MCF 10A (cell line): ENCODE measurements at regions of chr17 and their contacts with region 1.

Region 1: GRCh38 chr17:38351412-38352222 is at the start of gene SOCS7:
- DNase-seq: peak; percentile 91
- H3K4me3 Mint-ChIP-seq: peak within 1 kb of the TSS; percentile 81
- H3K27ac Mint-ChIP-seq: peak within 1 kb of the TSS; percentile 82
- H3K4me1 Mint-ChIP-seq: peaks cover 29% of the 10 kb centered on the region
- H3K27me3 Mint-ChIP-seq: no peaks in the 10 kb centered on the region
- CTCF ChIP-seq: no peak
- total RNA-seq, gene SOCS7: 26.2 and 32.1 TPM in 2 replicates

Region 2: DNA sequence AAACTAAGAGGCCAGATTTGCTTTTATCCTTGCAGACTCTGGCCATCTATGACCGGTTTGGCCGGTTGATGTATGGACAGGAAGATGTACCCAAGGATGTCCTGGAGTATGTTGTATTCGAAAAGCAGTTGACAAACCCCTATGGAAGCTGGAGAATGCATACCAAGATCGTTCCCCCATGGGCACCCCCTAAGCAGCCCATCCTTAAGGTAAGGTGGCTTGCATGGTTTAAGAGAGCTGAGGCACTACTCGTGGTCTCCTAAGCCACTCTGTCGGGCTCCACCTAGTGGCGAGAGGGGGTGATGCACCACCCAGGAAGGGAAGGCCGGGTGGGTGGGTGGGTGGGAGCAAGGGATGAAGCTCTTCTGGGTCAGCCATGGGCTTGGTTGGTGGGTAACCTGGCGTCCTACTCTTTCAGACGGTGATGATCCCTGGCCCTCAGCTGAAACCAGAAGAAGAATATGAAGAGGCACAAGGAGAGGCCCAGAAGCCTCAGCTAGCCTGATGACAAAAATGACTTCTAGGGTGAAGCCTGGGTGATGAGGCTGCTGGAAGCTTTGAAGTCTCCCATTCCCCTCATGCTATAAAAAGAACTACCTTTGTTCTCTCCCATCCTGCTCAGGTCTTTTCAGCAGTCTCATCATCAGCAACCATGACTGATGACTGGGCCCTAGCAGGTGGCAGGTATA is 29.4 kb before region 1 on chr17:
- CTCF ChIA-PET with region 1: interaction called, 19 read pairs
- POLR2A ChIA-PET with region 1: interaction called, 3 read pairs
- intact Hi-C with region 1: no loop called
- DNase-seq: peak; percentile 68
- H3K4me3 Mint-ChIP-seq: no peak overlapping the region
- H3K27ac Mint-ChIP-seq: no peak overlapping the region
- H3K4me1 Mint-ChIP-seq: peaks cover 7% of the 10 kb centered on the region
- H3K27me3 Mint-ChIP-seq: peaks cover 8% of the 10 kb centered on the region
- CTCF ChIP-seq: peak; percentile 67

Region 3: DNA sequence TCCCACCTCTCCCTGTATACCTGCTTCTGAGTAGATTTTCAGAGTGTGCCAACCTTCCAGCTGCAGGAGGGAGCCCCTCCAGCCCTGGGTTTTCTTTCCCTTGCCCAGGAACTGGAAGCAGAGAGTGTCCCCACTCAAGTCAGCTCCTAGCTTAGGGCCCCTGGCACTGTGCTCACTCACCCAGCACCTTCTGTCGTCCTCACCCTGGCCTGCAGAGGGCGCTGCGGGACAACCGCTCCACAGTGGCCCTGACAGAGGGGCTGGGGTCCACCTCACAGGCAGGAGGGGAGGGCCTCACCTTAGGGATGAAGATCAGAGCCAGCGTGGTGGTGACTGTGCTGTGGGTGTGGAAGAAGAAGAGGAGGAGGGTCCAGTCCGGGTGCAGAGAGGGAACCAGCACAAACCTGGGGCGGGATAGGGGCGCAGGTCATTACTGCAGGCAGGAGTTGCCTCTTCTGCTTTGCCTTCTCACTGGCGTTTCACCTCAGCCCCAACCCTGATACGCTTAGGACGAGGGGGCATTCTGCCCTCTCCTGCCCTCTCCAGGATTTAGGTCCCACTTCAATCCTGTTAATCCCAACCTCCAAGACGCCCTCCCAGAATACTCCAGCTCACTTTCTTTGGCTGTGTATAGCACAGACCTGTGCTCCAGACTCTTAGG is 17.9 kb before region 1 on chr17:
- CTCF ChIA-PET with region 1: interaction called, 32 read pairs
- POLR2A ChIA-PET with region 1: interaction called, 3 read pairs
- intact Hi-C with region 1: no loop called
- DNase-seq: peak; percentile 54
- H3K4me3 Mint-ChIP-seq: no peak overlapping the region
- H3K27ac Mint-ChIP-seq: peak overlapping the region; percentile 3
- H3K4me1 Mint-ChIP-seq: peaks cover 3% of the 10 kb centered on the region
- H3K27me3 Mint-ChIP-seq: peaks cover 12% of the 10 kb centered on the region
- CTCF ChIP-seq: peak; percentile 73

Region 4: GRCh38 chr17:38341035-38341721 is 10.4 kb before region 1 on chr17:
- CTCF ChIA-PET with region 1: interaction called, 13 read pairs
- POLR2A ChIA-PET with region 1: no interaction called
- intact Hi-C with region 1: no loop called
- DNase-seq: peak; percentile 44
- H3K4me3 Mint-ChIP-seq: no peak overlapping the region
- H3K27ac Mint-ChIP-seq: no peak overlapping the region
- H3K4me1 Mint-ChIP-seq: no peaks in the 10 kb centered on the region
- H3K27me3 Mint-ChIP-seq: peaks cover 10% of the 10 kb centered on the region
- CTCF ChIP-seq: no peak

Region 5: DNA sequence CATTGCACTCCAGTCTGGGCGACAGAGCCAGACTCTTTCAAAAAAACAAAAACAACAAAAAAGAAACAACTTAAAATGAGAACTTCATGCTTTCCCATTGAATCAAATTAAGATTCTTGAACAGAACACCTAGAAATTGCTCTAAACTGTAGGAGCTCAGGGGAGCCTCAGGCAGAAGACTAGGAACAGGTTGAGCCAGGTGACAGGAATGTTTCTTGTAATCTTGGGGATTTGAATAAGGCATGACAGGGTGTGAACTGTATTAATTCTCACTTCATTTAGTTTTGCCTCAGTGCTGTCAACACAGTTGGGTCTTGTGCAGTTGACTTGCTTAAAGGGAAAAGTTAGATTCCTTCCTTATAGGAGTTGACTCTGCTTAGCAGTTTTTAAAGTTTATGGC is 27.8 kb after region 1 on chr17:
- CTCF ChIA-PET with region 1: interaction called, 17 read pairs
- POLR2A ChIA-PET with region 1: interaction called, 4 read pairs
- intact Hi-C with region 1: no loop called
- DNase-seq: no peak
- H3K4me3 Mint-ChIP-seq: no peak overlapping the region
- H3K27ac Mint-ChIP-seq: no peak overlapping the region
- H3K4me1 Mint-ChIP-seq: no peaks in the 10 kb centered on the region
- H3K27me3 Mint-ChIP-seq: no peaks in the 10 kb centered on the region
- CTCF ChIP-seq: no peak

Region 6: DNA sequence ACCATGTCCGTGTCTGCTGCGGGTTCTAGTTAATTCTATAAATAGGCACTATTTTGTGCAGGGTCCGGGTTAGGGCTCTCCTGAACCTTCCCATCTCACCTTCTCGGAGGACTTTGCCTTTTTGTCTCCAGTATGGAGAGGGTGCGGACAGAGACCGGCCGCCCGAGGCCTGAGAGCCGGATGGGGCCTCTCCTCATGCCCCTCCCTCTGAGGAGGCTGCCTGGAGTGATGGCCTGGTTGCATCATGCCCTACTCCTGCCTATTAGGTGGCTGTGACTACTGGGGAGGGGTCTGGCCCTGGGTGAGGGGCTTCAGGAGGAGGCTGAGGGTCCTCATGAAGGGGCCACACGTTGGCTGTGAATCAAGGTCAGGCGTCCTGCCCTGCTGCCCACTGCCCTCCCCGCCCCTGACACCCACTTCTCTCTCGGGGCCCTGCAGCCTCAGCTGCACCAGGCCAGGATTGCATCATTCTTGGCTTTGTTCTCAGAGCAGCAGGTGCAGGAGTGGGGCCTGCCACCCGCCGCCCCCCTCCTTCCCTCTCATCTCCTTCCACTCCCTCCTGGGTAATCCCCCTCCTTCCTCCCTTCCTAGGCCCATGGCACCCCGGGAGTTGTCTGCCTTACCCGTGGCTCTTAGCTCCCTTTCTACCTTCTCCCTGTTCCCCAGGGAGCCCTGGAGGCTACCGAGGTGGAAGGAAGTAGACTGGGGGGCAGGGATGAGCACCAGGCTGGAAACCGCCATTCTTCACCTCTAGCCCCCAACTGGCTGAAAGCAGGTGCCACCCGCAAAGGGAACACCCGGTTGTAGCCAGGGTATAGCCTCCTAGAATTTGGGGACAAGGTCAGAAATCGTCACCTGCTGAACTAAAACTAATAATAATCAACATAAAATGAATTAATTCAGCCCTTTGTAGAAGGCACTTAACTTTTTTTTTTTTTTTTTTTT is 63.9 kb after region 1 on chr17:
- CTCF ChIA-PET with region 1: interaction called, 114 read pairs
- POLR2A ChIA-PET with region 1: interaction called, 18 read pairs
- intact Hi-C with region 1: loop called (anchors 1 kb)
- DNase-seq: peak; percentile 70
- H3K4me3 Mint-ChIP-seq: peak overlapping the region; percentile 47
- H3K27ac Mint-ChIP-seq: no peak overlapping the region
- H3K4me1 Mint-ChIP-seq: peaks cover 14% of the 10 kb centered on the region
- H3K27me3 Mint-ChIP-seq: peaks cover 21% of the 10 kb centered on the region
- CTCF ChIP-seq: no peak